Ascending aorta (tissue), 2 donors: ENCODE measurements at regions of chr5 and their contacts with region 1.

Region 1: DNA sequence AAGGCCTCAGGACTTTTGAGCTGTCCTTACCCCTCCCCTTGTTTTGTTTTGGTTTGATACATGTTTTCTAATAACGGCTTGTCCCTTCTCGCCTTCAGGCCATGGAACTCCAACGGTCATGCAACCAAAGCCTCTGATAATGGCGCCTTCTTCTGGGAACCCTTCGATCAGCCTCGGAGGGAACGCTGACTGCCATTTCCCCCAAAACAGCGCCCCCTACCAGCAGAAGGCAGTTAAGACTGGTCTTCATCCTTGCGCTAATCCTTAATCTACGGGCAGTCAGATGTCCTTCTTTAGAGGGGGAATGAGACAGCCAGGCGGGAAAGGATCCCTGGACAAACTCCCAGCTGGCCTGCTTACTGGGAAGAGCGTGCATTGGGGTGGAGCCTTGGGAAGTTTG is 276.6 kb downstream of the ICE1 start:
- DNase-seq: no peak
- H3K4me3 ChIP-seq: no peak overlapping the region
- H3K27ac ChIP-seq: no peak overlapping the region
- H3K4me1 ChIP-seq: no peaks in the 10 kb centered on the region
- H3K27me3 ChIP-seq: no peaks in the 10 kb centered on the region
- CTCF ChIP-seq: no peak

Region 2: DNA sequence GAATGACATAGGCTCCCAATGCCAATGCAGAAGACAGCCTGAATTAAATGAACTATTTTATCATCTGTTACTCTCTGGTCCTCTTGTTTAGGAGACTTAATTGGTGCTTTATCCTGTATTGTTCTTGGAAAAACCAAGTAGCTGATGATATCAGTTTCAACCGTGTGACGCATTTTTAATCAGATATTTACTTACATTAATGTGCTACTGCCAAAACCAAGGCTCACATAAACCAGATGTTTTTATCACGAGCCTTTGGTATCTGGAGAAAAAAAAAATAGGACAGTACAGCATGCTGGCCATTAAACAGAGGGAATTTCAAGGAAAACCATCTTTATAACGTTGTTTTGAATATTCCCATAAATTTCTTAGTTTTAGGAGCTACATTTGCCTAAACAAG is 186.5 kb before region 1 on chr5:
- intact Hi-C with region 1: loop called (anchors 10 kb)
- DNase-seq: no peak
- H3K4me3 ChIP-seq: no peak overlapping the region
- H3K27ac ChIP-seq: no peak overlapping the region
- H3K4me1 ChIP-seq: no peaks in the 10 kb centered on the region
- H3K27me3 ChIP-seq: no peaks in the 10 kb centered on the region
- CTCF ChIP-seq: no peak

Region 3: DNA sequence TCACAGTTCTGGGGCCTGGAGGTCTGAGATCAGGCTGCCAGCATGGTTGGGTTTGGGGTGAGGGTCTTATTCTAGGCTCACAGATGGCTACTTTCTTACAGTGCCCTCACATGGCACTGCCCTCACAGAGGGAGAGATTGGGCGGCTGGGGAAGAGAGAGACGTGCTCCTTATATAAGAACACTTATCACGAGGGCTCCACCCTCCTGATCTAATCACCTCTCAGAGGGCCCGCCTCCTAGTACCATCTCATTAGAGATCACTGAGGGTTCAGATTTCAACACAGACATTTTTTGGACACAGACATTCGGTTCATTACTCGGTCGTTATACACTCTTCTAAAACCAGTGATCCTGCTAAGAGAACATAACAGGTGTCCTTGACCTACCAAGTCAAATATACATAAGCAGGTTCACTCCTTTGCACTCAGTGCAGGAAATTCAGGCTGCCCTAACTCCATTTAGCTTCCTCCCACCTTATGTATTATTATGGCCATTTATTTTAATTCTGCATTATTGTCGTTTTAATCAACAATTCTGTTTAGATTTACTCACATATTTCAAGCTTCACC is 154.9 kb before region 1 on chr5:
- intact Hi-C with region 1: no loop called
- DNase-seq: no peak
- H3K4me3 ChIP-seq: no peak overlapping the region
- H3K27ac ChIP-seq: no peak overlapping the region
- H3K4me1 ChIP-seq: no peaks in the 10 kb centered on the region
- H3K27me3 ChIP-seq: no peaks in the 10 kb centered on the region
- CTCF ChIP-seq: no peak